SK-N-SH (cell line): ENCODE measurements at regions of chr17 and their contacts with region 1.

Region 1: DNA sequence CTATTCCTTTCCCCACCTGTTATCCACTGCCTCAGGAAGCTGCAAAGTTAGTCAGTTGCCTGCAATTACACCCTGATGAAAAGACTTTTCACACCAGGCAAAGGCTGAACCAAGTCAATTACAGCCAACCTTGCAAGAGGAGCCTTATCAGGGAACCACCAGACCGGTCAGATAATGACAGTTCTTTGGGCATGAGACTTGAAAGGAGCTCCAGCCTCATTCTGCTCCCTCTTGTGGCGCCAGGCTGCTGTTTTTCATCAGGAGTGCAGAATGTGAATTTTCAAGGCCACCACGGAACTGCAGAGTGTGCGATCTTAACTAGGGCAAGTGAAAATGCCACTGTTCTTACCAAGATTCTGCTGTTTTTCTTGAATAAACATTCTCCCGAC is 22.5 kb downstream of the DNAI2 start:
- DNase-seq: peak; percentile 76
- H3K4me3 ChIP-seq: no peak overlapping the region; a peak in 1 of 4 replicates
- H3K27ac ChIP-seq: no peak overlapping the region
- H3K4me1 ChIP-seq: peaks cover 0 to 3% of the 10 kb centered on the region in 2 experiments; a peak in 1 of 4 replicates
- H3K27me3 ChIP-seq: no peaks in the 10 kb centered on the region
- CTCF ChIP-seq: peak; percentile 16; the same call in 1 of the 2 replicates
- EP300 ChIP-seq: no peak
- RAD21 ChIP-seq: peak; percentile 76

Region 2: GRCh38 chr17:74212913-74213791 is 83.4 kb before region 1 on chr17 and contains the start of gene TTYH2:
- CTCF ChIA-PET with region 1: interaction called, 30 read pairs
- POLR2A ChIA-PET with region 1: interaction called, 3 read pairs
- DNase-seq: peak; percentile 97
- H3K4me3 ChIP-seq: peak within 1 kb of the TSS; percentile 55 to 69
- H3K27ac ChIP-seq: peak within 1 kb of the TSS; percentile 57 to 74
- H3K4me1 ChIP-seq: peaks cover 4 to 84% of the 10 kb centered on the region in 2 experiments; a peak in 3 of 4 replicates
- H3K27me3 ChIP-seq: no peaks in the 10 kb centered on the region
- CTCF ChIP-seq: peak; percentile 17
- EP300 ChIP-seq: no peak
- RAD21 ChIP-seq: peak; percentile 22; the same call in 1 of the 2 replicates
- polyA plus RNA-seq, gene TTYH2: 16.1 and 17.0 TPM in 2 replicates

Region 3: GRCh38 chr17:74259667-74260524 is 36.6 kb before region 1 on chr17:
- CTCF ChIA-PET with region 1: interaction called, 15 read pairs
- POLR2A ChIA-PET with region 1: no interaction called
- DNase-seq: peak; percentile 56
- H3K4me3 ChIP-seq: no peak overlapping the region
- H3K27ac ChIP-seq: no peak overlapping the region
- H3K4me1 ChIP-seq: peaks cover 0 to 5% of the 10 kb centered on the region in 2 experiments; a peak in 1 of 4 replicates
- H3K27me3 ChIP-seq: no peaks in the 10 kb centered on the region
- CTCF ChIP-seq: no peak
- EP300 ChIP-seq: no peak
- RAD21 ChIP-seq: no peak

Region 4: DNA sequence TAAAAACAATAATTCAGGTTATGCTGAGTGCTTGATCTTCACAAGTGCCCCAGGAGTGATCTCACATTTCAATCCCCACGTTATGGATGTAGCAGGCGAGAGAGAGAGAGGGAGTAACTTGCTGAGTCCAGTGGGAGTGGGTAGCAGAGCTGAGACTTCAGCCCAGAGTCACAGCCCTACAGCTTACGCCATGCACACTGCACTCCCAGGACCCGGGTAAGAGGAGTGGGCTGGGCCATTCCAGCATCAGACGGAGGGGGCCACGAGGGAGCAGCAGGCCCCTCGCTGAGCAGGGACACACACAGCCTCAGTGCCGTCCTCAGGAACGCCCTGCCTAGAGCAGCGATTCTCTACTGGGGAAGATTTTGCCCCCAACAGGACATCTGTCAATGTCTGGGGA is 19.7 kb after region 1 on chr17:
- CTCF ChIA-PET with region 1: interaction called, 24 read pairs
- POLR2A ChIA-PET with region 1: no interaction called
- DNase-seq: no peak
- H3K4me3 ChIP-seq: no peak overlapping the region
- H3K27ac ChIP-seq: no peak overlapping the region
- H3K4me1 ChIP-seq: no peaks in the 10 kb centered on the region
- H3K27me3 ChIP-seq: no peaks in the 10 kb centered on the region
- CTCF ChIP-seq: no peak
- EP300 ChIP-seq: no peak
- RAD21 ChIP-seq: no peak

Region 5: DNA sequence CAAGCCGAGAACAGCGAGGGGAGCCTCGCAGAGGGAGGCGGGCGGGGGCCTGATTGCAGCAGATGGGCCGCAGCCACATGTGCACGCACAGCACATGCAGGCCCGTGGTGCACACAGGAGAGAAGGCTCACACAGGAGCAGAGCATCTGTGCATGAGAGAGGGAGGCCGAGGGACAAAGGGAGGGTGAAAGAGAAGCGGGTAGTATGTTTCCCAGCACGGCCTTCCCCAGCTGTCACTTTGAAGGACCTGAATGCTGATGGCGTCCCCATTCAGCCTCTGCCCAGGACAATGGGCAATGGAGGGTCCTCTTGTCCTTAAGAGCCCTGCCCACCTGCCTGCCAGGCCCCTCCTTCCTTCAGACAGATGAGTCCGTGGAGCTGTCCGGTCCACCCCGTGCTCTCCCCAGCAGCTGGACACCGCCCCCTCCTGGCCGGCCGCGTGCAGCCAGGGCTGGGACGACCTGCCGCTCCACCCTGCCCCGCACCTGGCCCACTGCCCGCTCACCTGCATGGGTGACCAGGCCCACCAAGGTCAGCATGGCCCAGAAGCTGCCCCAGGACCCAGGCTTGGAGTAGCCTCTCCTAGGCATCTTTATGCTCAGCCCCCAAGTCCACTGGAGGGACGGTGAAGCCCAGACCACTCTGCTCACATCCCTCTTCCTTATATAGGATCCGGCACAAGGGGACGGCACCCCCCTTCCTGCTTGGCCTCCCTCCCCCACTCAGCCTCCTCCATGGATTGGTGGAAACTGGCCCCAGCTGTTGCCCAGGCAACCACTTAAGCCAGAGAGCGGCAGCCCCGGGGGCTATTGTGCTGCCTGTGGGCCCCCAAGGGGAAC is 64.9 kb after region 1 on chr17 and contains the start of gene BTBD17:
- CTCF ChIA-PET with region 1: interaction called, 10 read pairs
- POLR2A ChIA-PET with region 1: no interaction called
- DNase-seq: peak; percentile 78
- H3K4me3 ChIP-seq: peak within 1 kb of the TSS in 1 of 2 experiments; percentile 49; a peak in 1 of 4 replicates
- H3K27ac ChIP-seq: no peak within 1 kb of the TSS
- H3K4me1 ChIP-seq: no peaks in the 10 kb centered on the region; a peak in 1 of 4 replicates
- H3K27me3 ChIP-seq: no peaks in the 10 kb centered on the region
- CTCF ChIP-seq: no peak
- EP300 ChIP-seq: no peak
- RAD21 ChIP-seq: peak; percentile 40
- polyA plus RNA-seq, gene BTBD17: not detected in 2 replicates